GM23248 (cell line): ENCODE measurements at regions of chr18 and their contacts with region 1.

Region 1: DNA sequence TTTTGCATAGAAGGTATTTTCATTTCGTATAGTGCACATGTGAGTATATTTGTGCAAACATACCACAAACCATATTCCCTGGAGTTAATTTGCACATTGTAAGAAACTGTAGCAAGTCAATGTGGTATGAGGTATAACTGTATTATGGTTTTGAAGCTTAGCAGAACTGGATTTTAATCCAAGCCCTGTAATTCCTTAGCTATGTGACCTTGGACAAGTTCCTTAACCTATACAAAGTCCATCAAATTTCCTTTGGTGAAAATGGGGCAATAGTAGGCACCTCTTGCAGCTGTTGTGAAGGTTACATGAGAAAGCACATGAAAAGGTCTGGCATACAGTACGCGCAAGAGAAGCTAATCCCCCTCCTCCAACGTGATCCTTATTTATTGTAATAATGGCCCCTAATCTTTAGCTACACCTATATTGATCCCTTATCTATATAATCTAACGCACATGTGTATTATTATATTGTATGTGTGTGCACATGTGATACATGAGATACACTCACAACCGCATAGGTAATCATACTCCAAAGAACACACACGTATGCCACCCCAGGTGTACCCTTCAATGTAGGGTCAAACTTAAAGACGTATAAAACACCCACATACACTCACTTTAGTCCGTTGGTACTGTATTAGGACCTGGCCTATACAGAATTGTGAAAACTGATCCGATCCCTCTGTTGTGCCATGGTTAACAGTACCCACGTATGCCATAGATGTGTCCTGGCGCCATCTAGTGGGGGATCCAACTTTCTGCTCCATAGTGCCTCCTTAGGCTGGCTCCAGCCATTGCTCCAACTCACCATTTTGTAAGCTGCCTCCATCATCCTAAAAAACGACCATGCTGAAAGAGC is 402.9 kb upstream of the SLC14A2 start:
- DNase-seq: peak; percentile 84
- H3K4me3 ChIP-seq: no peak overlapping the region
- H3K27ac ChIP-seq: no peak overlapping the region
- H3K4me1 ChIP-seq: peaks cover 6% of the 10 kb centered on the region; the same call in 1 of the 2 replicates
- H3K27me3 ChIP-seq: no peaks in the 10 kb centered on the region

Region 2: GRCh38 chr18:44679056-44679905 is 533.1 kb before region 1 on chr18:
- in situ Hi-C with region 1: loop called (anchors 10 kb)
- DNase-seq: peak; percentile 96
- H3K4me3 ChIP-seq: peak overlapping the region; percentile 91
- H3K27ac ChIP-seq: peak overlapping the region; percentile 79
- H3K4me1 ChIP-seq: peaks cover 22% of the 10 kb centered on the region
- H3K27me3 ChIP-seq: no peaks in the 10 kb centered on the region

Region 3: GRCh38 chr18:44909191-44909719 is 303.2 kb before region 1 on chr18:
- in situ Hi-C with region 1: loop called (anchors 25 kb)
- DNase-seq: no peak
- H3K4me3 ChIP-seq: no peak overlapping the region
- H3K27ac ChIP-seq: no peak overlapping the region
- H3K4me1 ChIP-seq: 0 out of 2 replicates have a peak, but pooled peaks cover under 1% of the 10 kb centered on the region
- H3K27me3 ChIP-seq: no peaks in the 10 kb centered on the region

Region 4: GRCh38 chr18:44986933-44987332 is 225.5 kb before region 1 on chr18:
- in situ Hi-C with region 1: no loop called
- DNase-seq: peak; percentile 8
- H3K4me3 ChIP-seq: no peak overlapping the region
- H3K27ac ChIP-seq: no peak overlapping the region
- H3K4me1 ChIP-seq: no peaks in the 10 kb centered on the region
- H3K27me3 ChIP-seq: no peaks in the 10 kb centered on the region